IMR-90 (cell line): ENCODE measurements at regions of chrX and their contacts with region 1.

Region 1: GRCh38 chrX:114959729-114960128 is 57.7 kb downstream of the IL13RA2 start:
- DNase-seq: peak; percentile 22
- ATAC-seq: peak; percentile 46; the same call in 1 of the 2 replicates
- H3K4me3 ChIP-seq: no peak overlapping the region
- H3K27ac ChIP-seq: no peak overlapping the region
- H3K4me1 ChIP-seq: no peaks in the 10 kb centered on the region
- H3K27me3 ChIP-seq: peaks cover 3% of the 10 kb centered on the region
- CTCF ChIP-seq: peak; percentile 54
- POLR2A ChIP-seq: no peak
- RAD21 ChIP-seq: peak; percentile 51

Region 2: DNA sequence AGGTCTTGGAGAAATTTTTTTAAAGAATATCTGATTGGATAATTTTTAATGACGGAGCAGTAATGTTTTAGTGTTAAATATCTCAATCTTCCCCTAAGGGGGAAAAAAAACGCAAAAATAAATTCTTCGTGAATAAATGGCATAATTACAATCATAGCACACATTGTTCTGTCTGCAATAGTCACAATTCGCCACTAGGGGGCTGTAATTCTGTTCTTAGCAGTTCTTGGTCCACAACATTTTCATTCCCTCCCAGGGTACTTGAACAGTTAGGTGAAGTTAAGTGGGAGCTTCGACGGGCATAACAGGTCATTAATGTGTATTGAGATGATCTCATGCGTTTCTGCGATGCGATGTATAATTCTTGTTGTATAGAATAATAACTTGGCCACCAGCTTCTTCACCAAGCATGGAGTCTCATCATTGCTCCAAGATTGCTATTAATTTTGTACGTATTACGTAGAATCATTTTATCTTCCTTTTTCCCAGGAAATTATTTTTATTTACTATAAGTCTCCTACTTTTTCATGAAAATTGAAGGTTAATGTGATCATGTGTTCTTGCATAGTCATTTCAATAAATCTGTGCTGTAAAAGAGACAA is 348.6 kb before region 1 on chrX:
- CTCF ChIA-PET with region 1: no interaction called
- POLR2A ChIA-PET with region 1: no interaction called
- dilution Hi-C with region 1: no loop called
- in situ Hi-C with region 1: no loop called
- intact Hi-C with region 1: loop called (anchors 1 kb)
- DNase-seq: peak; percentile 35
- ATAC-seq: peak; percentile 59
- H3K4me3 ChIP-seq: no peak overlapping the region
- H3K27ac ChIP-seq: no peak overlapping the region
- H3K4me1 ChIP-seq: no peaks in the 10 kb centered on the region
- H3K27me3 ChIP-seq: no peaks in the 10 kb centered on the region
- CTCF ChIP-seq: peak; percentile 65
- POLR2A ChIP-seq: no peak
- RAD21 ChIP-seq: peak; percentile 30; the same call in 1 of the 2 replicates

Region 3: DNA sequence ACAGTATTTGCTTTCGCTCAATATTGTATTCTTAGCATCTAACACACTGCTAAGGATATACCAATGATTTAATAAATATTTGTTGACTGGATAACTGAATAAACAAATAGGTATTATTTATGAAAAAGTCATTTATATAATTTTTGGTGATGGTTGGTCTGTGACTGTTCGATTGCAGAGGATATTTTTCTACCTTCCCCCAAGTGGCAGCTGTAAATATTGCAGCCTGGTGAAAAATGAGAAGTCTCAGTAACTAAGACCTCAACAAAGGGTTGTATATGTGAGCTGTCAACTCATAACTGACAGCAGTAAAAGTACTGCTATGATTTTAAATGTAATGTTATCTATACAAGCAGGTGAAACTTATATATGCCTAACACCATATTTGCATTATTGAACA is 339.9 kb before region 1 on chrX:
- CTCF ChIA-PET with region 1: no interaction called
- POLR2A ChIA-PET with region 1: no interaction called
- dilution Hi-C with region 1: no loop called
- in situ Hi-C with region 1: loop called (anchors 10 kb)
- intact Hi-C with region 1: loop called (anchors 5 kb)
- DNase-seq: no peak
- ATAC-seq: peak; percentile 63; the same call in 1 of the 2 replicates
- H3K4me3 ChIP-seq: no peak overlapping the region
- H3K27ac ChIP-seq: no peak overlapping the region
- H3K4me1 ChIP-seq: no peaks in the 10 kb centered on the region
- H3K27me3 ChIP-seq: no peaks in the 10 kb centered on the region
- CTCF ChIP-seq: peak; percentile 25; the same call in 1 of the 2 replicates
- POLR2A ChIP-seq: no peak
- RAD21 ChIP-seq: no peak

Region 4: GRCh38 chrX:114626323-114626722 is 333.4 kb before region 1 on chrX:
- CTCF ChIA-PET with region 1: no interaction called
- POLR2A ChIA-PET with region 1: no interaction called
- dilution Hi-C with region 1: no loop called
- in situ Hi-C with region 1: loop called (anchors 10 kb)
- intact Hi-C with region 1: loop called (anchors 5 kb)
- DNase-seq: peak; percentile 3
- ATAC-seq: no peak
- H3K4me3 ChIP-seq: no peak overlapping the region
- H3K27ac ChIP-seq: no peak overlapping the region
- H3K4me1 ChIP-seq: no peaks in the 10 kb centered on the region
- H3K27me3 ChIP-seq: no peaks in the 10 kb centered on the region
- CTCF ChIP-seq: peak; percentile 19; the same call in 1 of the 2 replicates
- POLR2A ChIP-seq: no peak
- RAD21 ChIP-seq: 0 out of 2 replicates have a peak, but pooled peaks have one; percentile 10

Region 5: GRCh38 chrX:114841051-114841450 is 118.7 kb before region 1 on chrX:
- CTCF ChIA-PET with region 1: no interaction called
- POLR2A ChIA-PET with region 1: no interaction called
- dilution Hi-C with region 1: no loop called
- in situ Hi-C with region 1: no loop called
- intact Hi-C with region 1: no loop called
- DNase-seq: peak; percentile 0
- ATAC-seq: no peak
- H3K4me3 ChIP-seq: no peak overlapping the region
- H3K27ac ChIP-seq: no peak overlapping the region
- H3K4me1 ChIP-seq: no peaks in the 10 kb centered on the region
- H3K27me3 ChIP-seq: no peaks in the 10 kb centered on the region; the same call in 1 of the 2 replicates
- CTCF ChIP-seq: no peak
- POLR2A ChIP-seq: no peak
- RAD21 ChIP-seq: no peak

Region 6: DNA sequence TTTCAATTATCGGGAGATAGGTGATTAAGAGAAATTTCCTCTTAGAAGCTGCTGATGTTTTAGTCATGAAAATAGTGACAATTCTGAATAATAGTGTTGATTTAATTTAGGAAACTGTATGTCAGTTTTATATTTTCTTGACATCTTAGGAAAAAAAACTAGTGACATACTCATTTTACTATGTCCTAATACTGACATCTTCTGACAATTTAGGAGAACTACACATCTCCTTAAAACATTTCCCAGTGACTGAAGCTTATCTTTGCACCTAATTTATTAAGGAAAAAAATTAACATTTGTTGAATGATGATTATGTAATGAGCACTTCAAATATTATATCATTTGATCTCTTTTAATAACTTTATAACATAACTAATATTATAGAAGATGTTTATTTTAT is 187.5 kb after region 1 on chrX:
- CTCF ChIA-PET with region 1: no interaction called
- POLR2A ChIA-PET with region 1: no interaction called
- dilution Hi-C with region 1: no loop called
- in situ Hi-C with region 1: no loop called
- intact Hi-C with region 1: loop called (anchors 5 kb)
- DNase-seq: peak; percentile 40
- ATAC-seq: peak; percentile 44; the same call in 1 of the 2 replicates
- H3K4me3 ChIP-seq: no peak overlapping the region
- H3K27ac ChIP-seq: no peak overlapping the region
- H3K4me1 ChIP-seq: no peaks in the 10 kb centered on the region
- H3K27me3 ChIP-seq: no peaks in the 10 kb centered on the region
- CTCF ChIP-seq: peak; percentile 62
- POLR2A ChIP-seq: no peak
- RAD21 ChIP-seq: peak; percentile 60